Transverse colon (tissue), 4 donors: ENCODE measurements at regions of chr2 and their contacts with region 1.

Region 1: GRCh38 chr2:168687314-168687713 is 115.1 kb upstream of the NOSTRIN start:
- DNase-seq: no peak
- H3K4me3 ChIP-seq: no peak overlapping the region
- H3K27ac ChIP-seq: no peak overlapping the region
- H3K4me1 ChIP-seq: peaks cover 0 to 12% (median 8%) of the 10 kb centered on the region in 4 donors
- H3K27me3 ChIP-seq: no peaks in the 10 kb centered on the region
- CTCF ChIP-seq: peak in 2 of 5 experiments; percentile 14 to 39
- EP300 ChIP-seq: no peak
- POLR2A ChIP-seq: no peak

Region 2: DNA sequence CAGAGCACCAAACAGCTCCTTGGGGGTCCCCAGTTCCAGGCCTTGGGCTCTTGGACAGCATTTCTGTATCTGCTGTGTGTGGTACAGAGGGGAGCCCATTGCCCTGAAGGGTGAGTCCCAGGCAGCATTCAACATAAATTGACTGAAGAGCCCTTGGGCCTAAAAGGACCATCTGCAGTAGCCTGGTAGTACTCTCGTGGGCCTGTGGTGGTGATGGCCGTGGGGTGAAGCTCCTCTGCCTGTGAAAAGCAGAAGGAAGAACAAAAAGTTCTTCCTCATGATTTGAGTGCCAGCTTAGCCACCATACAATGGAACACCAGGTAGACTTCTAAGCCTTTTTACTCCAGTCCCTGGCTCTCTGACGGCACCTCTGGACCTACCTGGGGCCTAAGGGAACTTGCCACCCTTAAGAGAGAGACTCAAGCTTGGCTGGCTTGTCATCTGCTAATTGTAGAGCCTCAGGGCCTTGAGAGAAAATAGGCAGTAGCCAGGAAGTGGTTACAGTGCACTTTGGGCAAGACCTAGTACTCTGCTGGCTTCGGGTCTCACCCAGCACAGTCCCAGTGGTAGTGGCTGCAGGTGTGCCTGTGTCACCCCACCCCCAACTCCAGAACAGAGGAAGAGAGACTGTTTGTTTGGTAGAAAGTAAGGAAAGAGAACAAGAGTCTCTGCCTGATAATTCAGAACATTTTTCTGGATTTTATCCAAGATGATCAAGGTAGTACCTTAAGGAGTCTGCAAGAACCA is 315.9 kb before region 1 on chr2:
- in situ Hi-C with region 1: loop called in 1 of 4 experiments (anchors 25 kb)
- intact Hi-C with region 1: no loop called
- DNase-seq: no peak
- H3K4me3 ChIP-seq: no peak overlapping the region
- H3K27ac ChIP-seq: no peak overlapping the region
- H3K4me1 ChIP-seq: no peaks in the 10 kb centered on the region
- H3K27me3 ChIP-seq: no peaks in the 10 kb centered on the region
- CTCF ChIP-seq: no peak
- EP300 ChIP-seq: no peak
- POLR2A ChIP-seq: no peak

Region 3: DNA sequence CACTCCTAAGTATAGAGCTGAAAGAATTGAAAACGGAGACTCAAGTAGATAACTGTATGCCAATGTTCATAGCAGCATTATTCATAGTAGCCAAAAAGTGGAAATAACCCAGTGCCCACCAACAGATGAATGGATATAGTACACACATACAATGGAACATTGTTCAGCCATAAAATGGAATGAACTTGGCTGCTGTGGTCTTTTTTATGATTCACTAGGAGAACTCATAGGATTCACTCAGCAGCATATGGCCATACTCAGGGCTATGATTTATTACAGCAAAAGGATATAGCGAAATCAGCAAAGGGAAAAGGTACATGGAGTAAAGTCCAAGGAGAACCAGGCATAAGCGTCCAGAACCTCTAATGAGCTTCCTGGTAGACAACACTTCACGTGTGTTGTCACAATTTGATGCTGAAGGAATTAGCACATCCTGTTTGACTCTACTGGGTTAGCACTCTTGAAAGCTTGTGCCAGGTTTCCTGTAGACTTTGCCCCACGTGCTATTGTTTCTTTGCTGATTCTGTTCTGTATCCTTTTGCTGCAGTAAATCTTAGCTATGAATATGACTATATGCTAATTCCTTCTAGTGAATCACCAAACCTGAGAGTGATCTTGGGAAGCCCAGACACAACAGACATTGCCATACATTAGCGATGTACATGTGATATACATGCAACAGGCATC is 187.2 kb after region 1 on chr2:
- in situ Hi-C with region 1: no loop called
- intact Hi-C with region 1: no loop called
- DNase-seq: peak; percentile 27
- H3K4me3 ChIP-seq: no peak overlapping the region
- H3K27ac ChIP-seq: peak overlapping the region in 2 of 4 donors; percentile 4 to 33
- H3K4me1 ChIP-seq: peaks cover 0 to 8% (median 2%) of the 10 kb centered on the region in 4 donors
- H3K27me3 ChIP-seq: no peaks in the 10 kb centered on the region
- CTCF ChIP-seq: no peak
- EP300 ChIP-seq: no peak
- POLR2A ChIP-seq: no peak